Left colon (tissue), 2 donors: ENCODE measurements at regions of chr2 and their contacts with region 1.

Region 1: GRCh38 chr2:21317131-21317530 is 193.4 kb downstream of the TDRD15 start:
- DNase-seq: peak; percentile 30 to 65
- ATAC-seq: peak; percentile 71

Region 2: DNA sequence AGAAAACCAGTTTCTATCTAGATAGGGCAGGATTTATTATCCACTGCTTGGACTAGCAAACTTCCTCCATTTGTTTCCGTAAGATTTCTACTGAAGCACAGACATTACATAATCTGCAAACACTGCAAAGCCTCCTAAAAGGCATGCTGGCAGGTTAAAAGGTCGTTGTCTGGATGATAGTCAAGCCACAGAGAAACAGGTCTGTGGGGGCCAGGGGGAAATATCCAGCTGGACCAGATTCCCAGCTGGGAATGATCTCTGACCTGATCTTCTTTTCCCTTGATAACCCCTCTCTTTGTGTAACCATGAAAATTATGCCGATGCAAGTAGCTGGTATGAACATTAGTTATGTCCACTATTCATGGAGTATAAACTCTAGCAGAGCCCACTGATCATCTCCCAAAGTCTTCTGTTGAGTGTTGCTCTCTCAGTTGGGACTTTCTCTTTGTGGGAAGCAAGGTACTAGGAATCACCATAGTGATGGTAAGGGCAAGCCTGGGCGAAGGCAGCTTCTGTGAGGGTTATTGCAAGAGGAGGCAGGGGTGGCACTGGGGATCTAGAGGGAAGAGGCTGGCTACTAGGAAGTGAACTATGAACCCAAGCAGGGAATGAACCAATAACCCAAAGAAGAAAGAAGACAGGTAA is 588.9 kb before region 1 on chr2:
- intact Hi-C with region 1: no loop called
- DNase-seq: no peak
- ATAC-seq: peak; percentile 45

Region 3: GRCh38 chr2:21042958-21043743 is 274.0 kb before region 1 on chr2:
- intact Hi-C with region 1: loop called in 1 of 2 experiments (anchors 5 kb)
- DNase-seq: peak in 1 of 2 donors; percentile 64
- ATAC-seq: peak; percentile 67

Region 4: GRCh38 chr2:21175895-21176646 is 141.1 kb before region 1 on chr2:
- intact Hi-C with region 1: loop called (anchors 2 to 10 kb)
- DNase-seq: no peak
- ATAC-seq: peak; percentile 65

Region 5: DNA sequence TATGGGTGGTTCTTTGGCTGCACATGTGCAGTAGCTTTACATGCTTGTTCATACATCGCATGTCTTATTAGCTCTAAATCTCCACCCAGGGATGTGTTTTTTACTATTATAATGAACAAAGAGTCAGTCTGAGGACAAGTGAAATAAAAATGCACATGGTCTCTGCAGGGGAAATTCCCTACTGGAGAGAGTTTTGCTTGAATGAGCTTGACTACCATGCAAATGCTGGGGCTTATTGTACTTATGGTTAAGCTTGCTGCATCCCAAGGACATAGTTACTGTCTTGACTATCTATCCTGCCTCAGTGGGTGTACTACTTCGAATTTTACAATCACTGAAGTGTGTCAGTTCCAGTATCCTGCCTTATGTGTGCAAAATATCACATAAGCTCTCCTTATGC is 169.3 kb after region 1 on chr2:
- intact Hi-C with region 1: no loop called
- DNase-seq: no peak
- ATAC-seq: no peak

Region 6: GRCh38 chr2:22616031-22616430 is 1298.9 kb after region 1 on chr2:
- intact Hi-C with region 1: no loop called
- DNase-seq: no peak
- ATAC-seq: no peak